WTC11 (cell line): ENCODE measurements at regions of chr17 and their contacts with region 1.

Region 1: DNA sequence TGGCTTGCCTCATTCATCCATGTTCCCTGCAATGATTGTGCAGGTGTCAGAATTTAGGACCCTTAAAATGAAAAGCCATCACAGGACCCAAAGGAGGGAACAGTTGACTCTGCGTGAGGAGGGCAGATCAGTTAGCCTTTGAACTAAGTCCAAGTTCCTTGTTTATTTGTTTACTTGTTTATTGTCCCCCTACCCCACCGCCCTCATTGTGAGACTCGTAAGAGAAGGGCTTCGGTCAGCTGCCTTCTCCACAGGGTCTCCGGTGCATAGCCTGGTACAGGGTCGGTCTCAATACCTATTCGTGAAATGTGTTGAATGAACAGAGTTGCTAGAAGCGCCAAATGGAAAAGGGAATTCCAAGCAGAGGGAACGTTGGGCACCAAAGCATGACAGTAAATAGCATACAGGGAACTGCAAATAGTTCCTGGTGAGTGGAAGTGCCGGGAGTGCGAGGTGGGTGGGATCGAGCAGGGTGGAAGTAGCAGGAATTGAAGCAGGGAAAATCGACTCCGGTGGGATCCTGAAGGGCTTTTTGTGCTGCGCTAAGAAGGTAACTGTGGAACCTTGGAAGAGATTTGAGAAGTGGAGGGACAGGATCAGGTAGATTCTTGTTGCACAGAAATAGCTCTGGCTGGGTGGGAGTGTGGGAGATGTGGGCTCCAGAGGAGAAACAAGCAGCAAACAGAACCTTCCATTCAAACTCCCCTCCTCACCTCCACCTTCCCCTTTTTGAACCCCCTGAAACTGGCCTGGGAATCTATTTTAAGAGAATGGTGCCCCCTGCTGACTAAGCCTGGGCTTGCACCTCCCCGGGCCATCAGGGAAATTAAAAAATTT is 12.7 kb downstream of the SLC35B1 start:
- DNase-seq: peak; percentile 70
- ATAC-seq: peak; percentile 62
- H3K4me3 Mint-ChIP-seq: peak overlapping the region; percentile 46
- H3K27ac Mint-ChIP-seq: no peak overlapping the region
- H3K4me1 Mint-ChIP-seq: peaks cover 21% of the 10 kb centered on the region
- H3K27me3 Mint-ChIP-seq: no peaks in the 10 kb centered on the region; the same call in 1 of the 2 replicates
- CTCF ChIP-seq: peak; percentile 86

Region 2: DNA sequence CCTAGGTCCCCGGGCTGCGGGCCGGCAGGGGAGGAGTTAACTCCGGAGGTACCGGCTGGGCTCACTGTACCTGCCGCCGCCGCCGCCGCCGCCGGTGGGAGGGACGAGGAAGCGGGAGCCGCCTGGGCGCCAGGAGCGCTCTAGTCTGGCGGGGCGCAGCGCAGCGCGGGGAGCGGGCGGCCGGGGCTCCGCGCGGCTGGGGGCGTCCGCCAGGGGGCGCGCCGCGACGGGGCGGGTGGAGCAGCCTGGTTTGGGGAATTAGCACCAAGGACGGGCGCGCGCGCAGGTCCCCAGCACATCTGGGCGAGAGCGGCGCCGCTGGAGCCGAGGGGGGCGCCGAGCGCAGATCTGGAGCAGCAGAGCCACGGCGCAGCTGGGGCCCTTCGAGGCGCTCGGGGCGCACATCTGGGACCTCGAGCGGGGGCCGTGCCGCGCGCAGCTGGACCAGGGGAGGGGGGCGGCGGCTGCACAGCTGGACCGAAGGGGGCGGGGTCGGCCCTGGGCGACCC is 119.4 kb before region 1 on chr17 and contains the start of gene NXPH3:
- CTCF ChIA-PET with region 1: interaction called, 99 read pairs
- POLR2A ChIA-PET with region 1: no interaction called
- DNase-seq: peak; percentile 87
- ATAC-seq: peak; percentile 62
- H3K4me3 Mint-ChIP-seq: peak within 1 kb of the TSS; percentile 89
- H3K27ac Mint-ChIP-seq: no peak within 1 kb of the TSS; the same call in 1 of the 2 replicates
- H3K4me1 Mint-ChIP-seq: peaks cover 35% of the 10 kb centered on the region
- H3K27me3 Mint-ChIP-seq: peaks cover 39% of the 10 kb centered on the region
- CTCF ChIP-seq: peak; percentile 72
- total RNA-seq, gene NXPH3: 2.3 to 3.4 TPM (median 2.4 TPM) in 3 replicates